Common myeloid progenitor, CD34-positive (primary cell): ENCODE measurements at regions of chr18 and their contacts with region 1.

Region 1: DNA sequence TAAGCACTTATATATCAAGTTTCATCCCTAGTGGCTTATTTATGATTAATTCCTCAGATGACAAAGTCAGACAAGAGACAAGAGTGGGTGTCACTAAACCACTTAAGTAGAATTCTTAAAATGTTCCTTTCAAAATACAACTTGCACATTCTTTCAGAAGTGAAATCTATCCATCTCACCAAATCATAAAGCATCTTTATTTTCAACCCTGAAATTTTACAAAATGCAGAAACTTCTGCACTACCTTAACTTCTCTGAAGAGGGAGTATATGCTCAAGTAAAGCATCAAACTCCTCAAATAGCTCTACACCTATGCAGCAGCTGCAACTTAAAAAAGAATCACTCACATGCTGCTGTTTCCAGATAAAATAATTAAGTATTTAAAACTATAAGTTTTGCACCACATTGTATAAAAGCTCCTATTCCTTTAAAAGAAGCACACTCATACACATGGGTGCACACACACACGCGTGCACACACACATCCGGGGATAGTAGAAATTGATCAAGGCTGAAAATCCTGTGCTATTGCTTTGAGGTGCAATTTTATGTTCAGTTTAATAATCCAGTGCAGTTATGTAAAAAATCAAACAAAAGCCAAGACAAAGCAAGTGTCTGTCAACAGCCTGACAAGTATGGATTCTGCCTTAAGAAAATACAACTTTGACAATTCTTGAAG is 244.5 kb downstream of the TCF4 start:
- DNase-seq: peak in 2 of 3 donors; percentile 77 to 80
- H3K4me3 ChIP-seq: no peak overlapping the region
- H3K27ac ChIP-seq: no peak overlapping the region
- H3K4me1 ChIP-seq: peaks cover 20 to 53% (median 40%) of the 10 kb centered on the region in 4 experiments
- H3K27me3 ChIP-seq: no peaks in the 10 kb centered on the region

Region 2: GRCh38 chr18:54052732-54053429 is 1290.7 kb before region 1 on chr18:
- CTCF ChIA-PET with region 1: no interaction called
- POLR2A ChIA-PET with region 1: no interaction called
- DNase-seq: no peak
- H3K4me3 ChIP-seq: no peak overlapping the region
- H3K27ac ChIP-seq: no peak overlapping the region
- H3K4me1 ChIP-seq: no peaks in the 10 kb centered on the region
- H3K27me3 ChIP-seq: no peaks in the 10 kb centered on the region

Region 3: GRCh38 chr18:55322178-55322735 is 21.3 kb before region 1 on chr18:
- CTCF ChIA-PET with region 1: interaction called, 14 read pairs
- POLR2A ChIA-PET with region 1: interaction called, 9 read pairs
- DNase-seq: peak; percentile 88 to 95 (median 95)
- H3K4me3 ChIP-seq: peak overlapping the region; percentile 61 to 96 (median 89)
- H3K27ac ChIP-seq: peak overlapping the region; percentile 47 to 78
- H3K4me1 ChIP-seq: peaks cover 16 to 52% (median 28%) of the 10 kb centered on the region in 4 experiments
- H3K27me3 ChIP-seq: no peaks in the 10 kb centered on the region

Region 4: GRCh38 chr18:55415258-55415871 is 71.8 kb after region 1 on chr18:
- CTCF ChIA-PET with region 1: interaction called, 16 read pairs
- POLR2A ChIA-PET with region 1: no interaction called
- DNase-seq: peak; percentile 90 to 93 (median 90)
- H3K4me3 ChIP-seq: no peak overlapping the region
- H3K27ac ChIP-seq: no peak overlapping the region
- H3K4me1 ChIP-seq: peaks cover 2 to 10% (median 4%) of the 10 kb centered on the region in 4 experiments
- H3K27me3 ChIP-seq: no peaks in the 10 kb centered on the region